Activated naive CD4-positive, alpha-beta T cell treated with anti-CD3 and anti-CD28 coated beads for 36 hours (primary cell): ENCODE measurements at regions of chr1 and their contacts with region 1.

Region 1: DNA sequence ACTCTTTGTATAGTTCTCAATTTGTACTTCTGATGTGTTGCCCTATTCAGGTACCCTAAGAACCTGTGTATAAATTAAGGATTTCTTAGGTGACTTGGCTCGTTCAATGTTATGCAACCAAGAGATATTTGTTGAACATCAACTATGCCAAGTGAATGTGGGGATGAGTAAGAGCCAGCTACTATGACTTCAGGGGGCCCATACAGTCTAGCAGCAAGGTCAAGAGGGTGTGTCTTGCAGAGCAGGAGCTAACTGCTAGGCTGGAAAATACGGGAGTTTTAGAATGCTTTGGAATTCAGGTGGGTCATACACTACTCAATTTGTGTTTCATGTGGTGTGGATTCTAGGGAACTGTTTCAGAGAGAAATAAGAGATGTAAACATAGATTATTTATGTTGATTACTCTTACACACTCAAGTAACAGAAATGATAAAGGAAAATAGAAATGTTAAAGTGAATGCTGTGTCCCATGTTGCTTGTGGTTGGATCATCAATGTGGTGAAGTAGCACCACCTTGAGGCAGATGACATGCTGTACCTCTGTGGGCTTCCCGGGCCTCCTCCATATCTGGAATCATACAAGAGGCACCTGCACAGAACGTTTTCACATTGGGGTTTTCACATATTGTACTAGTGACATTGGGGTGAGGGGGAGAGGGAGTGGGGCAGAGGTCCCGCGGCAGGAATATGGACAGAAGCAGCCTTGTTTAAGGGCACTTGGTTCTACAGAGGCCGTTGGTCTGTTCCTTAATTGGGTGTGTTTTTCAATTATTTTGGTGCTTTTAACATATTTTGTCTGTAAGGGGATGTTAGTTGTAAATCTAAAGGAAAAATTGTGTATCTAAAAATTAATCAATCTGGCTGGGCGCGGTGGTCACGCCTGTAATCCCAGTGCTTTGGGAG is 12.4 kb downstream of the ARPC5 start:
- DNase-seq: peak; percentile 78
- H3K4me3 Mint-ChIP-seq: no peak overlapping the region
- H3K27ac Mint-ChIP-seq: peak overlapping the region; percentile 37
- H3K4me1 Mint-ChIP-seq: peaks cover 14% of the 10 kb centered on the region
- H3K27me3 Mint-ChIP-seq: no peaks in the 10 kb centered on the region

Region 2: DNA sequence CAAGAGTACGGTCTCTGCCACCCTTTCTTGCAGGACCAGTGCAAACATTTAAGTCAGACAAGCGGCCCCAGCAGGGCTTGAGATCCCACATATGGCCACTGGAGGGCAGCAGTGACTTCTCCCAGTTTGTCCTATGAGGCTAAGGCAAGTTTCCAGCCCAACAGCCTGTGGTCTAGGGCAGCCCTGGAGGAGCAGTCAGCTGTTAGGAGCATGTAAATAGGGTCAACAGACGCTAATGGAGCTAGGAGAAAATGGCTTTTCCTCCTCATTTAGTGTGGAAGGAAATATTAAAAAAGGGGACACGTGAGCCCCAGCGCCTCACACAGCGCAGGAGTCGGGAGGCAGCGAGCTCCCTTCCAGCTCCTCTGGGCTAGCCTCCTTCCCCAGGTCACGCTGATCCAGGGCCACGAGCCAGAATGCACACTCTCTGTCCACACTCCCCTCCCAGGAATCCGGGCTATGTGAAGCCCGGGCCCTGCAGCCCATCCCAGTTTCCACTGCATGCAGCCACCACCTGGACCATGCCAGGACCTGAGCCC is 341.5 kb before region 1 on chr1:
- CTCF ChIA-PET with region 1: interaction called, 3 read pairs
- intact Hi-C with region 1: loop called (anchors 1 kb)
- DNase-seq: peak; percentile 88
- H3K4me3 Mint-ChIP-seq: no peak overlapping the region
- H3K27ac Mint-ChIP-seq: no peak overlapping the region
- H3K4me1 Mint-ChIP-seq: no peaks in the 10 kb centered on the region
- H3K27me3 Mint-ChIP-seq: no peaks in the 10 kb centered on the region

Region 3: DNA sequence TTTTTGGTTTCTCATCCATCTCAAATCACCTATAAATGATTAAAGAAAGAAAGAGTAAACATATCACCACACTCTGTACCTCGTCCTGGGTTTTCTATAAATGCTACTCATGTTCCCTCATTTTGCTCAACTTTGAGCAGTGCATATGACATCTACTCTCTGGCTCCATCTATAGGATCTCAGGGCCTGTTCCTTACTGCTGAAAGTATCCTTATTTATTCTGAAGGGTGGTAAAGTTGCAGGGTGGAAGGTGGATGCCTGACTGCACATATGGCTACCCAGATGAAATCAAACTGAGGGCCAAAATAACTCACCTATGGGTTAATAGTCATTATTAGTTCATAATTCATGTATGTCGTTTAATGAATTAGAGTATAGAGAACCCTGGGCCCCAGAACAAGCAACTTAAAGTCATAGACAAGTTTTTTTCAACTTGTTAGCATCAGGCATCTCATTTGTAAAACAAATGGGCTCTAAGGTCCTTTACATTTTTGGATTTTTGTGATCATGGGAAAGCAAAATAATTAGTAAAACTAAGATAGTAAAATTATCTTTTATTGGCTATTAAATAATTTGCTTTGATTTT is 79.4 kb before region 1 on chr1:
- CTCF ChIA-PET with region 1: no interaction called
- intact Hi-C with region 1: loop called (anchors 1 kb)
- DNase-seq: no peak
- H3K4me3 Mint-ChIP-seq: no peak overlapping the region
- H3K27ac Mint-ChIP-seq: peak overlapping the region; percentile 43
- H3K4me1 Mint-ChIP-seq: no peaks in the 10 kb centered on the region
- H3K27me3 Mint-ChIP-seq: no peaks in the 10 kb centered on the region

Region 4: DNA sequence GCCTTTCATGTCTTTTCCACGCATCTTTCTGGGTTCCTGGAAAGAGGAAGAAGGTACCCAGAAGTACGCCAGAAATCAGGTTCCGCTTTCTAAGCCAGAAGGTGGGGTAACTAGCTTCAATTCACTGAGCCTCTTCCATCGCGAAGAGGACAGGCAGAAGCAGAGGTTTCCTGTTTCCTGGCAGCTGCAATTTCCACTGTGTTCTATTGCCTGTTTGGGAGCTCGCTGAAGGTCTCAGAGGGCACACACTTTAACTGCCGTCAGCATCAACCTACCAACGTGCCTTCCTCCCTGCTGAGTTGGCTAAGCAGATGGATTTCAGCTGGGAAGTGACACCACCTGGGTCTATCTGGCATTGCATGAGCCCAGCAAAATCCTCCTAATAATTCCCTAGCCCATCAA is 42.9 kb before region 1 on chr1:
- CTCF ChIA-PET with region 1: interaction called, 4 read pairs
- intact Hi-C with region 1: loop called (anchors 1 kb)
- DNase-seq: peak; percentile 32
- H3K4me3 Mint-ChIP-seq: no peak overlapping the region
- H3K27ac Mint-ChIP-seq: no peak overlapping the region
- H3K4me1 Mint-ChIP-seq: peaks cover 8% of the 10 kb centered on the region
- H3K27me3 Mint-ChIP-seq: no peaks in the 10 kb centered on the region

Region 5: GRCh38 chr1:183590244-183591191 is 32.6 kb before region 1 on chr1 and contains the start of gene NCF2:
- CTCF ChIA-PET with region 1: no interaction called
- intact Hi-C with region 1: loop called (anchors 2 kb)
- DNase-seq: peak; percentile 80
- H3K4me3 Mint-ChIP-seq: peak within 1 kb of the TSS; percentile 49
- H3K27ac Mint-ChIP-seq: peak within 1 kb of the TSS; percentile 93
- H3K4me1 Mint-ChIP-seq: peaks cover 42% of the 10 kb centered on the region
- H3K27me3 Mint-ChIP-seq: no peaks in the 10 kb centered on the region
- total RNA-seq, gene NCF2: 14.0 to 14.3 TPM